H1 (cell line): ENCODE measurements at regions of chr1 and their contacts with region 1.

Region 1: GRCh38 chr1:201361652-201362504 is 15.6 kb downstream of the TNNT2 start:
- DNase-seq: peak; percentile 56 to 88
- H3K4me3 ChIP-seq: no peak overlapping the region
- H3K27ac ChIP-seq: no peak overlapping the region
- H3K4me1 ChIP-seq: peaks cover 0 to 5% (median under 1%) of the 10 kb centered on the region in 4 experiments; a peak in 5 of 7 replicates
- H3K27me3 ChIP-seq: no peaks in the 10 kb centered on the region
- CTCF ChIP-seq: peak; percentile 94 to 96 (median 95)
- EP300 ChIP-seq: no peak
- POLR2A ChIP-seq: no peak
- RAD21 ChIP-seq: peak; percentile 98

Region 2: GRCh38 chr1:201214461-201214860 is 147.4 kb before region 1 on chr1:
- CTCF ChIA-PET with region 1: interaction called, 10 read pairs
- POLR2A ChIA-PET with region 1: no interaction called
- DNase-seq: no peak
- H3K4me3 ChIP-seq: no peak overlapping the region
- H3K27ac ChIP-seq: no peak overlapping the region
- H3K4me1 ChIP-seq: peaks cover 0 to 3% (median 0%) of the 10 kb centered on the region in 4 experiments; a peak in 1 of 7 replicates
- H3K27me3 ChIP-seq: no peaks in the 10 kb centered on the region
- CTCF ChIP-seq: peak; percentile 65 to 83 (median 82)
- EP300 ChIP-seq: no peak
- POLR2A ChIP-seq: no peak
- RAD21 ChIP-seq: peak; percentile 60 to 68

Region 3: DNA sequence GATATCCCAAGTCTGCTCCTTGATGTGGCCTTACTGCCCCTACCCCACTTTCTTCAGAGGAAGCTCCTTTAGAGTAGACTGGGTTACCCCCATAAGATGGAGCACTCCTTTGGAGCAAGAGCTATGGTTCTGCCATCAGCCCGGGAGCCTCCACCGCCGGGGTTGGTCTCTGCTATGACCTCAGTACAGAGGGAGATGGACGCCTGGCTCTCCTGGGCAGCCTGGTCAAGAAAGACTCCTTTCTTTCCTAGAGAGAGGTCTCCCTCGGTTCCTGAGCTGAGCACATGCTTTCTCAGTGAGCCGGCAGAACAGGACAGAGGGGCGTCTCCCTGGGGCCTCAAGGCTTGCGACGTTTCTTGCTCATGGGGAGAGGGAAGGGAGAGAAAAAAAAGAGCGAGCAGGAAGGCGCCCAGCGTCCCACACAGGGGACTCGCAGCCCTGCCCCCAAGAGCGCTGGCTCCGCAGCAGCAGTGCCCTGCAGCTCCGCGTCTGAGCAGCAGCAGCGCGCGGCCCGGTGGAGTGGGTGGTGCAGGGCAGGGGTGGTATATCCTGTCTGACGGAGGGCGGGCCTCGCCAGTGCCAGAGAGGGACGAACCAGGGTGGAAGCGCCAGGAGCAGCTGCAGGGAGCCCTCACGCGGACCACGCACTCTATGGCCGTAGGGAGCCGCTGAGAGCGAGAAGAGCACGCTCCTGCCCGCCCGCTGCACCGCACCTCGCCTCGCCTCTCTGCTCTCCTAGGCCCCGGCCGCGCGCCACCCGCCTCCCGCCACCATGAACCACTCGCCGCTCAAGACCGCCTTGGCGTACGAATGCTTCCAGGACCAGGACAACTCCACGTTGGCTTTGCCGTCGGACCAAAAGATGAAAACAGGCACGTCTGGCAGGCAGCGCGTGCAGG is 78.7 kb before region 1 on chr1 and contains the start of gene PKP1:
- CTCF ChIA-PET with region 1: interaction called, 45 read pairs
- POLR2A ChIA-PET with region 1: no interaction called
- DNase-seq: peak in 1 of 2 experiments; percentile 79
- H3K4me3 ChIP-seq: peak within 1 kb of the TSS in 3 of 4 experiments; percentile 3 to 41 (median 16); a peak in 3 of 8 replicates
- H3K27ac ChIP-seq: no peak within 1 kb of the TSS
- H3K4me1 ChIP-seq: peaks cover 0 to 9% (median 9%) of the 10 kb centered on the region in 4 experiments; a peak in 5 of 7 replicates
- H3K27me3 ChIP-seq: peaks cover 15 to 31% (median 30%) of the 10 kb centered on the region in 4 experiments
- CTCF ChIP-seq: no peak
- EP300 ChIP-seq: no peak
- POLR2A ChIP-seq: no peak
- RAD21 ChIP-seq: no peak
- total RNA-seq, gene PKP1: 0.88 and 0.95 TPM in 2 replicates

Region 4: GRCh38 chr1:201299968-201300367 is 61.9 kb before region 1 on chr1:
- CTCF ChIA-PET with region 1: interaction called, 29 read pairs
- POLR2A ChIA-PET with region 1: no interaction called
- DNase-seq: no peak
- H3K4me3 ChIP-seq: no peak overlapping the region
- H3K27ac ChIP-seq: no peak overlapping the region
- H3K4me1 ChIP-seq: peaks cover 0 to 5% (median 2%) of the 10 kb centered on the region in 4 experiments; a peak in 3 of 7 replicates
- H3K27me3 ChIP-seq: no peaks in the 10 kb centered on the region; a peak in 1 of 7 replicates
- CTCF ChIP-seq: no peak
- EP300 ChIP-seq: no peak
- POLR2A ChIP-seq: no peak
- RAD21 ChIP-seq: no peak

Region 5: GRCh38 chr1:201329286-201329685 is 32.6 kb before region 1 on chr1:
- CTCF ChIA-PET with region 1: interaction called, 17 read pairs
- POLR2A ChIA-PET with region 1: no interaction called
- DNase-seq: no peak
- H3K4me3 ChIP-seq: no peak overlapping the region
- H3K27ac ChIP-seq: no peak overlapping the region
- H3K4me1 ChIP-seq: no peaks in the 10 kb centered on the region; a peak in 1 of 7 replicates
- H3K27me3 ChIP-seq: no peaks in the 10 kb centered on the region
- CTCF ChIP-seq: no peak
- EP300 ChIP-seq: no peak
- POLR2A ChIP-seq: no peak
- RAD21 ChIP-seq: no peak

Region 6: DNA sequence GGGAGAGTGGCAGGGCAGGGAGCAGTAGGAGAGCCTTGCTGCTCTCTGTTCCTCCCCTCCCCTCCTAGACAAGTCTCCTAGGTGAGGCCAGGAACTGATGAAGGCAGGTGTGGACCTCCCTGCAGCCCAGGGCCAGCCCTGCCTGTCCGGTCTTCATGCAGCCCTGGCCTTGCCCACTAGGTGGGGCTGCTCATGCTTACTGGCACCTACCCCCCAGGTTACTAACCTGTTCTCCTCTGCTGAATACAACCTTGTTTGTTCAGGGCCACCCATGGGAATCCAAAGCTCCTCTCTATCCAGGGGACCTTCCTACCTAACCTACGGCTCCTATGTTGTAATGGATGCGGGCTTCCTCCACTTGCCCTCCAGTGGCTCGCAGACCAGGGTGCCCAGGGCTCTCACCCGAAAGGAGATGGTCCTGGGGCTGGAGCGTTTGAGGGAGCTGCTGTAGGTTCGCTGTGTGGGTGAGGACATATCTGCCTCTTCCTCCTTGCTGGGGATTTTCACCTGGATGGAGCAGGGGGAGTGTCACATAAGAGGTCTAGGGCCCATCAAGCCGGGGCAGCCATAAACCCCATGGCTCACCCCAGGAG is 23.5 kb after region 1 on chr1:
- CTCF ChIA-PET with region 1: interaction called, 165 read pairs
- POLR2A ChIA-PET with region 1: interaction called, 3 read pairs
- DNase-seq: peak; percentile 38 to 95
- H3K4me3 ChIP-seq: no peak overlapping the region
- H3K27ac ChIP-seq: no peak overlapping the region
- H3K4me1 ChIP-seq: peaks cover 0 to 2% (median 0%) of the 10 kb centered on the region in 4 experiments; a peak in 1 of 7 replicates
- H3K27me3 ChIP-seq: no peaks in the 10 kb centered on the region
- CTCF ChIP-seq: peak; percentile 92 to 99 (median 98)
- EP300 ChIP-seq: no peak
- POLR2A ChIP-seq: no peak
- RAD21 ChIP-seq: peak; percentile 74 to 84

Region 7: DNA sequence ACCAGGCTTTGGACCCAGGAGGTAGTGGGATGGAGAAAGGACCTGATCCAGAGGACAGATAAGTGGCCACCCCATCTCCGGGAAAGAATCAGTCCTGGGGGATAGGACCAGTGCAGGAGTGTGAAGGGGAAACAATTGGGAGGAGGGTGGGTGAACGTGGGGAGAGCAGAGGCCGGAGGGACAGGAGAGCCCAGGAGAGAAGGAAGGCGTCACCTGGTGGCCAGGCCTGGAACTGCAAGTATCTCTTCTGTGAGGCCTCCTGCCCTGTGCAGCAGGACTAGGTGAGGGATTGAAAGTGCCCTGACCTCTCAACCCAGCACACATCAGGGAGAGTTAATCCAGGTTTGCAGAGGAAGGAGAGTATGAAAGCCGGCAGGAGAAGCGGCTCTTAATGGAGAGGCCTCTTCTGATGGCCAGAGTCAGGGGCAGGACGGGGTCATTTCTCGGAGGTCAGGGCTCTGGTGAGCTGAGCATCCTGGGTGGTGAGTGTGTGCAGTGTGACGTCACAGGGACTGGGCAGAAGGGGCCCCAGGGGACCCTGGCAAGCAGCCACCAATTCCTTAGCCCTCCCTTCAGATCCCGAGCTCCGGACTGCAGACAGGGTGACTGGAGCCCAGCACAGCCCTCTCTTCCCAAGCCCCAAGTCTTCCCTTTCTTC is 46.4 kb after region 1 on chr1:
- CTCF ChIA-PET with region 1: interaction called, 28 read pairs
- POLR2A ChIA-PET with region 1: no interaction called
- DNase-seq: peak; percentile 80 to 98
- H3K4me3 ChIP-seq: no peak overlapping the region
- H3K27ac ChIP-seq: no peak overlapping the region
- H3K4me1 ChIP-seq: peaks cover 0 to 5% (median 0%) of the 10 kb centered on the region in 4 experiments; a peak in 2 of 7 replicates
- H3K27me3 ChIP-seq: no peaks in the 10 kb centered on the region; a peak in 1 of 7 replicates
- CTCF ChIP-seq: peak; percentile 91 to 99 (median 99)
- EP300 ChIP-seq: no peak
- POLR2A ChIP-seq: no peak
- RAD21 ChIP-seq: peak; percentile 81 to 82